Endothelial cell of umbilical vein (primary cell): ENCODE measurements at regions of chr6 and their contacts with region 1.

Region 1: DNA sequence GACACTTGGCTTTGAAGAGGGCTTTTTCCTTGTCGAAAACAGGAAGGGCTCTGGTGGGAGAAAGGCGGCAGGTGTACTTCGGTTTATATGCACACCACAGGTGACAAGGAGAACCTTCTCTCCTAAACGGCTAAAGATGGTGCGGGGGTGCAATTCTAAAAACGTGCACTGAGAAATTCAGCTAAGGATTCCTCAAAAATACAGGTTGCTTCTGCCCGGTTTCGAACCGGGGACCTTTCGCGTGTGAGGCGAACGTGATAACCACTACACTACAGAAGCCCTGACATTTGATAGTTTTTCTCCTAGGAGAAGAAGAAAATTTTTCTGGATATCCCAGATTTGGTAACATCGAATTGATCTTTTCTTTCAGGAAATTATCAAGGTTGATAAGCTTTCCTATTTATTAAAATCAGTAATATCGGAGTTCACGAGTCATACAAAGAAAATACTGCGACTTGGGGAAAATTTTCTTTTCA is 32.0 kb downstream of the POM121L2 start:
- DNase-seq: peak; percentile 39
- H3K4me3 ChIP-seq: peak overlapping the region; percentile 16 to 58 (median 54)
- H3K27ac ChIP-seq: no peak overlapping the region
- H3K4me1 ChIP-seq: peaks cover 6% of the 10 kb centered on the region
- H3K27me3 ChIP-seq: peaks cover 30 to 37% of the 10 kb centered on the region in 2 experiments
- CTCF ChIP-seq: no peak
- POLR2A ChIP-seq: no peak

Region 2: GRCh38 chr6:27237089-27237803 is 42.9 kb before region 1 on chr6:
- CTCF ChIA-PET with region 1: no interaction called
- POLR2A ChIA-PET with region 1: no interaction called
- dilution Hi-C with region 1: no loop called
- intact Hi-C with region 1: loop called (anchors 1 kb)
- DNase-seq: peak; percentile 30
- H3K4me3 ChIP-seq: peak overlapping the region in 2 of 3 experiments; percentile 61 to 65
- H3K27ac ChIP-seq: no peak overlapping the region
- H3K4me1 ChIP-seq: peaks cover 12% of the 10 kb centered on the region
- H3K27me3 ChIP-seq: peaks cover 0 to 3% of the 10 kb centered on the region in 2 experiments
- CTCF ChIP-seq: no peak
- POLR2A ChIP-seq: no peak